GM10248 (cell line): ENCODE measurements at regions of chr4 and their contacts with region 1.

Region 1: GRCh38 chr4:122577808-122578781 is 42.8 kb downstream of the IL21 start:
- DNase-seq: peak; percentile 57
- CTCF ChIP-seq: peak; percentile 86

Region 2: GRCh38 chr4:121900132-121900983 is 677.7 kb before region 1 on chr4:
- CTCF ChIA-PET with region 1: interaction called, 80 read pairs
- POLR2A ChIA-PET with region 1: no interaction called
- DNase-seq: peak; percentile 37
- CTCF ChIP-seq: peak; percentile 79

Region 3: GRCh38 chr4:121950212-121950679 is 627.8 kb before region 1 on chr4:
- CTCF ChIA-PET with region 1: interaction called, 40 read pairs
- POLR2A ChIA-PET with region 1: no interaction called
- DNase-seq: peak; percentile 86
- CTCF ChIP-seq: peak; percentile 85

Region 4: DNA sequence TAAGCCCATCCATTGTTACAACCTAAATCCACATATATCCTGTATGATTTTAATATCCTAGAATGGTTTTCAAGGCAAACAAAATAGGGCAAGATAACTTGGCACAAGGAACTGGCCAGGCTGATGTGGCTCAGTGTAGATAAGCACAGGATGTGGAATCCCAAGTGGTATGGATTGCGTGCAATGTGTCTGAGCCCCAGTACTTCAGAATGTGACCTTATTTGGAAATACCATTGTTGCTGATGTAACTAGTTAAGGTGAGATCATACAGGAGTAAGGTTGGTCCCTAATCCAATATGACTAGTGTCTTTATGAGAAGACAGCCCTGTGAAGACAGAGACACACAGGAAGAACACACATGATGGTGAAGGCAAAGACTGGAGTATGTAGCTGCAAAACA is 29.6 kb before region 1 on chr4:
- CTCF ChIA-PET with region 1: interaction called, 13 read pairs
- POLR2A ChIA-PET with region 1: no interaction called
- DNase-seq: no peak
- CTCF ChIP-seq: no peak

Region 5: DNA sequence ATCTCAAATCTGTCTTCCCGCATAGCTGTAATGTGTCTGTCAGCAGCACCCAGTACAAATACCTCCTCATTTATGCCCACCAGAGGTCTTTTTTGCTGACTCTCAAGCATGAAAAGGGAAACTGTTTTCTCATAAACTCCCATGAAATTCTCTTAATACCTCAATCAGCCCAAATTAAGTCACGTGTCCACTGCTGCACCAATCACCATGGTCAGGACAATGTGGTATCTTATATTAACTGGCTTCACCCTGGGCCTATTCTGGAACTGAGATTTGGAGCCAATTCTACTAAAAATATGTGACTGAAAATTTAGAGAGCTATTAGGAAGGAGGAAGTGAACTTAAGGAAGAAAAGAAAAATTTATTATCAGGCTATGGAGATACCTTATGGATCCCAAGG is 15.6 kb before region 1 on chr4:
- CTCF ChIA-PET with region 1: interaction called, 21 read pairs
- POLR2A ChIA-PET with region 1: no interaction called
- DNase-seq: no peak
- CTCF ChIP-seq: no peak

Region 6: GRCh38 chr4:122716825-122717448 is 138.8 kb after region 1 on chr4:
- CTCF ChIA-PET with region 1: interaction called, 12 read pairs
- POLR2A ChIA-PET with region 1: no interaction called
- DNase-seq: peak; percentile 67
- CTCF ChIP-seq: peak; percentile 86

Region 7: DNA sequence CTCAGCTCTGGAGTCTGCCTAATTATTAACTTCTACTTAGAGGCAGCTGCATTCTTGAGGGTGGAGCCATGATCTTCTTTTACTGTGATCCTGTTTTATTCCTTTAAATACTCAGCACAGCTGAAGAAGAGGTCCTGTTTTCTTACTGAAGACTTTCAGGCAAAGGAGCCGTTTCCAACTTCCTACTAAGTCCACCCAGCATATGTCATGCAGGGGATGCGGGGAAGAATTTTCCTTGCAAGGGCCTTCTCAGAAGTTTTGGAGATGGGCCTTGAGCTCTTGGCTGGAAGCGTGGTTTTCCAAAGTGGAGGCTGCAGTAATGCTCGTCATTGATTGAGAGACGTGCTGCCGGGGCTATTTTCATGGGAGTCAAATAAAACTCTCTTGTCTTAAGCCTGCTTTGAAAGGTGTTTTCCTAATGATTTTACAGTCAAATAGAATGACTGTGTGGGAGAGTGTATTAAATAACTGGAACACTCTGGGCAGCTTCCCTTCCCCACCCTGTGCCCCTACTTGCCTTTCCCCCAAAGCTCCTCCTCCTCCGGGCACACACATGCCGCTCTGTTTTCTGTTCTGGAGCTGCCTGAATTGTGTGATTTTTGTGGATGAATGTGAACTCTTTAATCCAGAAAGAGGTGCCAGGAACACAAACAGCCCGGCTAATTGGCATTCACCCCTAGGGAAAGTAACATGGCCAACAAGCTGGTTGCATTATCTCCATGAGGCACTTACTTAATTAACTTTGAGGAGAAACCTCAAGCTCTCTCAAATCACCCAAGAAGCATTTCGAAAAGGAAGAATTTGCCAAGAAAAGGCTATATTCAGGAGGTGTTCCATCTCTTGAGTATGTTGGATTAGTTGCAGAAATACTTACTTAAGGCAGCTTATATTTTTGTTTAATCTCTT is 276.6 kb after region 1 on chr4:
- CTCF ChIA-PET with region 1: no interaction called
- POLR2A ChIA-PET with region 1: no interaction called
- DNase-seq: no peak
- CTCF ChIP-seq: no peak